B cell (primary cell): ENCODE measurements at regions of chr20 and their contacts with region 1.

Region 1: GRCh38 chr20:25399037-25399430 is 8.4 kb upstream of the ABHD12 start:
- DNase-seq: peak; percentile 69
- ATAC-seq: peak; percentile 53
- H3K4me3 ChIP-seq: no peak overlapping the region
- H3K4me3 Mint-ChIP-seq: no peak overlapping the region
- H3K27ac ChIP-seq: no peak overlapping the region
- H3K27ac Mint-ChIP-seq: no peak overlapping the region
- H3K4me1 ChIP-seq: no peaks in the 10 kb centered on the region
- H3K4me1 Mint-ChIP-seq: peaks cover 5% of the 10 kb centered on the region
- H3K27me3 ChIP-seq: no peaks in the 10 kb centered on the region
- H3K27me3 Mint-ChIP-seq: peaks cover 11% of the 10 kb centered on the region
- CTCF ChIP-seq: peak; percentile 76

Region 2: DNA sequence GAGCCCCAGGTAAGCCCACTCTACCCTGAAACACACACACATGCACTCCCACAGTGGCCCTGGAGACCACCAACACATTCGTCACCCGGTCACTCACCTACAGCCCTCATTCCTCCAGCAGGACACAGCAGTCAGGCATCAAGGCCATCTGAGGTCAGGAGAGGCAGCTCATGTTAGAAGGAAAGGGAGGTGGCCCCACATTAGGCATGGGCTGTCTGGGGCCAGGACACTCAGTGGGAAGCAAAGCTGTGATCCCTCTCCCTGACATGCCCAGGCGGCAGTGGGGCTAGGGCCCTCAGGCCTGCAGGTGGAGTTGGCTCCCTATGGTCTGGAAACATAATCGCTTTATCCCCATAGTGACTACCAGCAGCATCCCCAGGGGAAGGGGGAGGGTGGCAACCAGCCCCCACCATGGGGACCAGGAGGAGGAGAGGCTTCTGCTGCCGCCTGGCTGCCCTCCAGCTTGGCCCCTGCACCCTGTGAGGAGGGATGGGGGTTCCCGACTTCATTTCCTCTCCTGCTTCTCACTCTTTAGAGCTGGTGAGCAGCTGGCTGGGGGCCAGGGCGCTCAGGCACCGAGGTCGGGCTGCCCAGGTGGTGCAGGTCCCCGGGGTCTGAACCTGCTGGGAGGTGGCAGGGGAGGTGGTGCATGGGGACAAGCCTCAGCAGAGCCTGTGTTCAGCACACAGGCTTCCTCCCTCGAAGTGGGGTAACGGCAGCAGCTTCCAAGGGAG is 526.6 kb before region 1 on chr20:
- CTCF ChIA-PET with region 1: no interaction called
- POLR2A ChIA-PET with region 1: no interaction called
- intact Hi-C with region 1: no loop called
- DNase-seq: peak; percentile 7
- ATAC-seq: no peak
- H3K4me3 ChIP-seq: no peak overlapping the region
- H3K4me3 Mint-ChIP-seq: no peak overlapping the region
- H3K27ac ChIP-seq: no peak overlapping the region
- H3K27ac Mint-ChIP-seq: no peak overlapping the region
- H3K4me1 ChIP-seq: peaks cover 0 to 5% of the 10 kb centered on the region in 2 donors
- H3K4me1 Mint-ChIP-seq: peaks cover 7% of the 10 kb centered on the region
- H3K27me3 ChIP-seq: peaks cover 0 to 17% (median 0%) of the 10 kb centered on the region in 4 experiments
- H3K27me3 Mint-ChIP-seq: peaks cover 37% of the 10 kb centered on the region
- CTCF ChIP-seq: no peak

Region 3: DNA sequence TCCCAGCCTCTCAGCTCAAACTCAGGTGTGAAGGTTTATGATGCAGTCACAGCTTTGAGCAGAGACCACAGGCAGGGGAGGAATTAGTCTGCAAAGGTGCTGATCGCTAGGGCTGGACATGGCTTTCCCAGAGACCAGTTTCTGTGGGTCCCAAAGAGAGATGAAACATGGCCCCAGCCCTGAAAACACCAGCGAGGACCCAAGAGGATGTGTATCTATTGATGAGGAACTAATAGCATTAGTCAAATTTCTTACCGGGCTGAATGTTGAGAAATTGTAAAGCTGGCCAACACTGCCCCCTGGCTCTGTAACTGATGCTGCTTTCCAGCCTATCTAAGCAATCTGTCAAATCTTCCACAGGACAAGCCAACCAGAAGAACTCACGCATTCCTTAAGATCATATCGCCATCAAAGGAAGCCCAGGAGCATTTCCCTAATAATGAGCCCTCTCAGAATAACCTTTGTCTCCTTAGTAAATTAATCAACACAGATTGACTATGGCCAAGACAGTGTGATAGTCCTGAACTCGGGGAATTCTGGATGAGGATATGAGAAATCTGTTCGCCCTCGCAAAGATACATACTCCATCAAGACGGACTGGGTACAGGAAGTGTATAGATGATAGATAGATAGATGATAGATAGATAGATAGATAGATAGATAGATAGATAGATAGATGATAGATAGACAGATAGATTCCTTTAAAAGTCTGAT is 333.3 kb before region 1 on chr20:
- CTCF ChIA-PET with region 1: interaction called, 9 read pairs
- POLR2A ChIA-PET with region 1: no interaction called
- intact Hi-C with region 1: loop called (anchors 1 kb)
- DNase-seq: peak; percentile 88
- ATAC-seq: peak; percentile 88
- H3K4me3 ChIP-seq: no peak overlapping the region
- H3K4me3 Mint-ChIP-seq: no peak overlapping the region
- H3K27ac ChIP-seq: no peak overlapping the region
- H3K27ac Mint-ChIP-seq: no peak overlapping the region
- H3K4me1 ChIP-seq: peaks cover 24 to 27% of the 10 kb centered on the region in 2 donors
- H3K4me1 Mint-ChIP-seq: peaks cover 27% of the 10 kb centered on the region
- H3K27me3 ChIP-seq: peaks cover 0 to 12% (median 4%) of the 10 kb centered on the region in 4 experiments
- H3K27me3 Mint-ChIP-seq: peaks cover 14% of the 10 kb centered on the region
- CTCF ChIP-seq: peak; percentile 77

Region 4: GRCh38 chr20:25294459-25295385 is 104.3 kb before region 1 on chr20:
- CTCF ChIA-PET with region 1: interaction called, 133 read pairs
- POLR2A ChIA-PET with region 1: no interaction called
- intact Hi-C with region 1: loop called (anchors 1 kb)
- DNase-seq: peak; percentile 75
- ATAC-seq: peak; percentile 95
- H3K4me3 ChIP-seq: no peak overlapping the region
- H3K4me3 Mint-ChIP-seq: no peak overlapping the region
- H3K27ac ChIP-seq: no peak overlapping the region
- H3K27ac Mint-ChIP-seq: no peak overlapping the region
- H3K4me1 ChIP-seq: peaks cover 0 to 18% of the 10 kb centered on the region in 2 donors
- H3K4me1 Mint-ChIP-seq: peaks cover 11% of the 10 kb centered on the region
- H3K27me3 ChIP-seq: no peaks in the 10 kb centered on the region
- H3K27me3 Mint-ChIP-seq: no peaks in the 10 kb centered on the region
- CTCF ChIP-seq: peak; percentile 73

Region 5: DNA sequence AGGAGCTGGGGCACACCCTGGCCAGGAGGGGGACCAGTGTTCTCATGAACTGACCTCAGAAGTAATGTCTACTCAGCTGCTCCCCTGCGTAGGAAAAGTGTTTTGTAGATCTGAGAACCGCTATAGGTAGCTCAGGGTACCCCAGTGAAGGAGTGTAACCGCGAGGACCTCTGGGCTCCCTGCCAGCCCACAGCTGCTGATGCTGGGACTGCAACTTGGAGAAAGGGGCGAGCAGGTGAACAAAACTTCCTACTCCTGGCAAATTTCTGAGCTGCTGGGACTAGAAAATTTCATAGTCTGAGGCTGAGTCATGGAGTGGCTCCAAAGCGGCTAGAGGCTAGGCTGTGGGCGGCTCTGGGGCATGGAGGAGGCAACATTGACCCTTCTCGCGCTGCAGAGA is 99.2 kb before region 1 on chr20:
- CTCF ChIA-PET with region 1: interaction called, 133 read pairs
- POLR2A ChIA-PET with region 1: no interaction called
- intact Hi-C with region 1: no loop called
- DNase-seq: no peak
- ATAC-seq: no peak
- H3K4me3 ChIP-seq: no peak overlapping the region
- H3K4me3 Mint-ChIP-seq: no peak overlapping the region
- H3K27ac ChIP-seq: no peak overlapping the region
- H3K27ac Mint-ChIP-seq: no peak overlapping the region
- H3K4me1 ChIP-seq: peaks cover 0 to 16% of the 10 kb centered on the region in 2 donors
- H3K4me1 Mint-ChIP-seq: peaks cover 7% of the 10 kb centered on the region
- H3K27me3 ChIP-seq: no peaks in the 10 kb centered on the region
- H3K27me3 Mint-ChIP-seq: no peaks in the 10 kb centered on the region
- CTCF ChIP-seq: no peak

Region 6: DNA sequence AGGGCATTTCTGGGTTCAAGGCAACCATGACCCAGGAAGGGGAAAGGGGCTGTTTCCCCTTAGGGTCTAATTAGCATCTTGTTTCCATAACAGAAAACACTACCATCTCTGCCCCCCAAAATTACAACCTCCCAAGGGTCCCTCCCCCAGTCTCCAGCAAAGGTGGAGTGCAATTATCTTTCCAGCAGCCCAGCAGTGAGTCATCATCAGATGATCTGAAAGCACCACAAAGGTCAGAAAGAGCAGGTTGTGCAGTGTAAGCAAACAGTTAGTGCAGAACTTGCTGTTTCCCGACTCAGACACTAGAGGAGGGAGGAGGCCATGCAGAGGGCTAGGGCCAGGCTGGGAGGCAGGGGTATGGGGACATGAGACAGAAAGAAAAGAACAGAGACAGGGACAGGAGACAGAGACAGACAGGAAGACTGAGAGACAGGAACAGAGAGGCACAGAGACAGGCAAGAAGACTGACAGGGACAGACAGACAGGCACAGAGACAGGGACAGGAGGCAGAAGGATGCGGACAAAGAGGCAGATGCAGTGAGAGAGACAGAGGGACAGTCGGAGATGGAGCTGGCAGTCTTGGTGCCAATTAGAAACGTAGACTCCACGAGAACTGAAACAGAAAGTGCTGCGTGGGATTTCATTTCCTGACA is 88.6 kb before region 1 on chr20:
- CTCF ChIA-PET with region 1: interaction called, 14 read pairs
- POLR2A ChIA-PET with region 1: no interaction called
- intact Hi-C with region 1: loop called (anchors 1 kb)
- DNase-seq: no peak
- ATAC-seq: peak; percentile 90
- H3K4me3 ChIP-seq: peak overlapping the region in 4 of 5 experiments; percentile 0 to 16 (median 4)
- H3K4me3 Mint-ChIP-seq: peak overlapping the region; percentile 70
- H3K27ac ChIP-seq: peak overlapping the region in 1 of 2 donors; percentile 16
- H3K27ac Mint-ChIP-seq: peak overlapping the region; percentile 82
- H3K4me1 ChIP-seq: peaks cover 10 to 19% of the 10 kb centered on the region in 2 donors
- H3K4me1 Mint-ChIP-seq: peaks cover 24% of the 10 kb centered on the region
- H3K27me3 ChIP-seq: no peaks in the 10 kb centered on the region
- H3K27me3 Mint-ChIP-seq: no peaks in the 10 kb centered on the region
- CTCF ChIP-seq: no peak

Region 7: DNA sequence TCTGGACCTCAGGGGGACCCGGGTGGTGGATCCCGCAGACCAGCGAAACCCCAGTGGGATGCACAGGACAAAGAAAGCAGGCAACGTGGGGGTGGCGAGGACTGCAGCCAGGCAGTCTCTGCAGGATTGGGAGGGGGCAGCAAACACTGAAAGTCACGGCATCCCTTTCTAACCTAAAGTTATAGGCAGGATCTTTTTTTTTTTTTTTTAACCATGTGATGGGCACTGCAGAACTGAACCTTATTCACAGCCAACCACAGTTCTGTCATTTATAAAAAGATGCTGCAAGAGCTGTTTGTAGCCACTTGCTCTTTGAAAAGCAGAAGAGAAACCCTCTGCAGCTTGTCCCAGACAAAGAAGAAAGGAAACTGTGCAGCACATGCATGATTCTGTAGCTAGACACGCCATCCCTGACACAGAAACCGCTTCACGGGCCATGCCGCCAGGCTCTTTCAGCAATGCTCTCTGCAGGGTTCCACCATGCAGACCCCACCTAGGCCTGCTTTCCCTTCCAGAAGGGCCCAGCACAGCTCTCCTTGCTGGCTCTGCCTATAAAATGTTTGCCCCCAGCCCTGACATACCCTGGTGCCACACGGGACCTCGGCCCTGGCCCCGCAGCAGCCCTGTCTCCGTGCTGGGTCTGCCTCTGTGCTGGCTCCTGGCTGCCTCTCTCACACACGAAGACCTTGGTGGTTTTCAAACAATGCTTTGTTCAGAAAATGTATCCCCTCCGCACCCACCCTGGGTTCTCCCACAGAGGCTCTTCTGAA is 80.4 kb before region 1 on chr20:
- CTCF ChIA-PET with region 1: interaction called, 21 read pairs
- POLR2A ChIA-PET with region 1: no interaction called
- intact Hi-C with region 1: no loop called
- DNase-seq: peak; percentile 71
- ATAC-seq: peak; percentile 91
- H3K4me3 ChIP-seq: peak overlapping the region in 1 of 5 experiments; percentile 2
- H3K4me3 Mint-ChIP-seq: peak overlapping the region; percentile 67
- H3K27ac ChIP-seq: peak overlapping the region; percentile 23 to 70
- H3K27ac Mint-ChIP-seq: peak overlapping the region; percentile 93
- H3K4me1 ChIP-seq: peaks cover 17 to 29% of the 10 kb centered on the region in 2 donors
- H3K4me1 Mint-ChIP-seq: peaks cover 34% of the 10 kb centered on the region
- H3K27me3 ChIP-seq: no peaks in the 10 kb centered on the region
- H3K27me3 Mint-ChIP-seq: no peaks in the 10 kb centered on the region
- CTCF ChIP-seq: no peak

Region 8: DNA sequence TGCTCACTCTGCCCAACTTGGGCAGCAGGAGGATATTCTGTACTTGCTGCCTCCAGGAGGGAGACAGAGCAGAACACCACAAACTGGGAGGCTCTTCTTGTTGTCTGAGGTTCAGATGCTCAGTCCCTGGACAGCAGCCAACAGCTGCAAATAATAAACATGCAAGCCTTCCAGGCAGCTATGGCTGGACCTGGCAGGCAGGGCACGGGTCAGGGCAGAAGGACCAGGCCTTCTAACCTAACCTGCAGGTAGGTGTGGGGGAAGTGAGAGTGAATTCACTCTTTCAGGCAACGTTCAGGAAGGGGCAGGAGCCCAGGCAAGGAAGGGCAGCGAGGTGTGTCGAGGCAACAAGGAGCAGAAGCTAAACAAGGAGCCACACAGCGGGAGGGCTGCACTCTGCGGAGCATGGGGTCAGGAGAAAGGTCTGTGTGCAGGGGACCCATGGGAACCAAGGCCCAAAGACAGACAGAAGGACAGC is 154.8 kb after region 1 on chr20:
- CTCF ChIA-PET with region 1: no interaction called
- POLR2A ChIA-PET with region 1: no interaction called
- intact Hi-C with region 1: no loop called
- DNase-seq: no peak
- ATAC-seq: no peak
- H3K4me3 ChIP-seq: no peak overlapping the region
- H3K4me3 Mint-ChIP-seq: no peak overlapping the region
- H3K27ac ChIP-seq: no peak overlapping the region
- H3K27ac Mint-ChIP-seq: no peak overlapping the region
- H3K4me1 ChIP-seq: no peaks in the 10 kb centered on the region
- H3K4me1 Mint-ChIP-seq: no peaks in the 10 kb centered on the region
- H3K27me3 ChIP-seq: no peaks in the 10 kb centered on the region
- H3K27me3 Mint-ChIP-seq: peaks cover 10% of the 10 kb centered on the region
- CTCF ChIP-seq: no peak